ENCODE measurements at regions of chr1 and their contacts with region 1.

Region 1: GRCh38 chr1:224513787-224514209 is 79.2 kb upstream of the WDR26 start:
- DNase-seq: peak; percentile 90 to 94 (median 92)
- ATAC-seq: peak; percentile 95
- H3K4me3 ChIP-seq: no peak overlapping the region
- H3K27ac ChIP-seq: no peak overlapping the region
- H3K4me1 ChIP-seq: peaks cover 18 to 25% of the 10 kb centered on the region in 2 experiments
- H3K27me3 ChIP-seq: peaks cover 0 to 5% of the 10 kb centered on the region in 2 experiments; a peak in 1 of 5 replicates
- CTCF ChIP-seq: peak; percentile 99
- EP300 ChIP-seq: no peak
- POLR2A ChIP-seq: no peak
- RAD21 ChIP-seq: peak; percentile 98 to 99

Region 2: GRCh38 chr1:224644553-224645154 is 130.9 kb after region 1 on chr1:
- CTCF ChIA-PET with region 1: interaction called, 16 read pairs
- POLR2A ChIA-PET with region 1: interaction called, 4 read pairs
- in situ Hi-C with region 1: loop called (anchors 5 kb)
- intact Hi-C with region 1: loop called (anchors 1 kb)
- DNase-seq: peak; percentile 67 to 77 (median 74)
- ATAC-seq: peak; percentile 86
- H3K4me3 ChIP-seq: no peak overlapping the region
- H3K27ac ChIP-seq: no peak overlapping the region
- H3K4me1 ChIP-seq: no peaks in the 10 kb centered on the region
- H3K27me3 ChIP-seq: peaks cover 36 to 72% of the 10 kb centered on the region in 2 experiments
- CTCF ChIP-seq: peak; percentile 84 to 92 (median 90)
- EP300 ChIP-seq: no peak
- POLR2A ChIP-seq: no peak
- RAD21 ChIP-seq: peak; percentile 59 to 80

Region 3: DNA sequence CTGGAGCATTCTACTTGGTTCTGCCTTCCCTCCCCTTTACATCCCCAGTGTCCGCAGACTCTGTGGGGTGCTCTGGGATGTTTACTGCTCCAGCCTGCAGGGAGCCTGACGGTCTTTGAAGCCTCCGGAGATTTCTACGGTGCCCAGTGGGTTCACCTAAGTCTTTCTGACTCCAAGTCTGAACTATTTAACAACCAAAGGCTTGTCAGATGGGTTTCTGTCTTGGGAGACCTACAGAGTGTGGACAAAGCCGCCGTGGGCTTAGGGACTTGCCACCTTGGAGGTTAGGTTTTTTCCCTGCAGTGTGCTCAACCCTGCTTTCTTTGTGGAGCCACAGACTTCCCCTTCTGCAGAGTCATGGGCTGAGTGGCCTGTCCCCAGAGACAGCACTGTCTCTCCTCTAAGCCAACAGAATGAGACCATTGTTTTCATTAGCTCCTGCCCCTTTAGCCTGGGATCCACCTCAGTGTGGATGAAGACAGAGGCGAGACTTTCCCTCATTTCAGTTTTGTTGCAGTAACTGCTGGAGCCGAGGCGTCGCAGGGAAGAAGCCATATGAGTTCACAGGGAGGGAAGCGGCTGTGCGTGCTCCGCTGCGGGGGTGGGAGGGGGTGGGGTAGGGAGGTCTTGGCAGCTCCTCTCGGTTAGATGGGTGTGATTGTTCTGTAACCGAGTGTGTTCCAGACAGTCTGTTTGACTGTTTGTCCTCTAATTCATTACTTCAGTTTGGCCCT is 223.0 kb after region 1 on chr1:
- CTCF ChIA-PET with region 1: interaction called, 6 read pairs
- POLR2A ChIA-PET with region 1: interaction called, 3 read pairs
- in situ Hi-C with region 1: no loop called
- intact Hi-C with region 1: loop called (anchors 10 kb)
- DNase-seq: peak in 3 of 4 experiments; percentile 22 to 43 (median 34)
- ATAC-seq: peak; percentile 48
- H3K4me3 ChIP-seq: no peak overlapping the region
- H3K27ac ChIP-seq: no peak overlapping the region
- H3K4me1 ChIP-seq: no peaks in the 10 kb centered on the region
- H3K27me3 ChIP-seq: peaks cover 23 to 50% of the 10 kb centered on the region in 2 experiments
- CTCF ChIP-seq: no peak
- EP300 ChIP-seq: no peak
- POLR2A ChIP-seq: no peak
- RAD21 ChIP-seq: no peak

Region 4: GRCh38 chr1:224851210-224851847 is 337.5 kb after region 1 on chr1:
- CTCF ChIA-PET with region 1: interaction called, 15 read pairs
- POLR2A ChIA-PET with region 1: interaction called, 3 read pairs
- in situ Hi-C with region 1: loop called (anchors 5 kb)
- intact Hi-C with region 1: loop called (anchors 1 kb)
- DNase-seq: peak; percentile 46 to 60 (median 54)
- ATAC-seq: peak; percentile 89
- H3K4me3 ChIP-seq: no peak overlapping the region
- H3K27ac ChIP-seq: no peak overlapping the region
- H3K4me1 ChIP-seq: no peaks in the 10 kb centered on the region
- H3K27me3 ChIP-seq: peaks cover 0 to 7% of the 10 kb centered on the region in 2 experiments; a peak in 1 of 5 replicates
- CTCF ChIP-seq: peak; percentile 73 to 90 (median 76)
- EP300 ChIP-seq: no peak
- POLR2A ChIP-seq: no peak
- RAD21 ChIP-seq: peak; percentile 60 to 67; a peak in 3 of 4 replicates

Region 5: DNA sequence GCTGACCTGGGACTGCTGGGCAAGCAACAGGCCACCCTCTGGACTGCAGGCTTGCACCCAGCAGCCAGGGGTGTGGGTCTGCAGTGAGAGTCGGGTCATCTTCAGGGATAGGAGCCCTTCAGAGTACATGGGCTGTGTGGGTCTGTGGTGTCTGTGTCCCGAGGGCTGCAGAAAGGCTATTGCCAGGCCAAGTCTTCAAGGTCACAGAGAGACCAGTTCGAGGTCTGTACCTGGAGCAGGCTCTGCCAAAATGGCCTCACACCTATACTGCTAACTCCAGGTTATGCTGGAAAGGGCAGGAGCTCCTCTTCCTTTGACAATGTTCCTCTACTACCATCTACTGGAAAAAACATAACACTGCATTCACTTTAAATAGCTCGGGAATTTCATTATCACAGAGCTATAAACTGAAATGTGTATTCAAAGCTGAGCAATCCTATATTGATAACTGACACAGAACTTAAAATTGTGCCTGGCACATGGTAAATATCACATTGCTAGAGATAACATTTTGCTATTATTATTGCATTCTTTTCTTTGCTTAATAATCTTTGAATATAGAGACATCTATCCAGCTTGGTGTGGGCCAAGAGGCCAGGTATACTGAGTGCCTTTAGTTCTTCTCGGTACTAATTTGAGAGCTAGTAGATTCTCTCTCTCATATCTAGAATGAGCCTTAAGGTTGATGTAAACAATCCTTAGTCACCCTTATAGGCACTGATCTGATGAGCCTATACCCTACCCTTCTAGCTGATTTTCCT is 408.8 kb after region 1 on chr1:
- CTCF ChIA-PET with region 1: interaction called, 10 read pairs
- POLR2A ChIA-PET with region 1: no interaction called
- in situ Hi-C with region 1: loop called (anchors 5 kb)
- intact Hi-C with region 1: loop called (anchors 1 kb)
- DNase-seq: peak; percentile 51 to 64 (median 56)
- ATAC-seq: peak; percentile 92
- H3K4me3 ChIP-seq: no peak overlapping the region
- H3K27ac ChIP-seq: no peak overlapping the region
- H3K4me1 ChIP-seq: no peaks in the 10 kb centered on the region
- H3K27me3 ChIP-seq: peaks cover 10 to 16% of the 10 kb centered on the region in 2 experiments
- CTCF ChIP-seq: peak; percentile 63 to 90 (median 76)
- EP300 ChIP-seq: no peak
- POLR2A ChIP-seq: no peak
- RAD21 ChIP-seq: peak; percentile 82 to 89